Activated B cell treated with CpG ODN at 0.5 μM for 24 hours (primary cell): ENCODE measurements at regions of chr7 and their contacts with region 1.

Region 1: DNA sequence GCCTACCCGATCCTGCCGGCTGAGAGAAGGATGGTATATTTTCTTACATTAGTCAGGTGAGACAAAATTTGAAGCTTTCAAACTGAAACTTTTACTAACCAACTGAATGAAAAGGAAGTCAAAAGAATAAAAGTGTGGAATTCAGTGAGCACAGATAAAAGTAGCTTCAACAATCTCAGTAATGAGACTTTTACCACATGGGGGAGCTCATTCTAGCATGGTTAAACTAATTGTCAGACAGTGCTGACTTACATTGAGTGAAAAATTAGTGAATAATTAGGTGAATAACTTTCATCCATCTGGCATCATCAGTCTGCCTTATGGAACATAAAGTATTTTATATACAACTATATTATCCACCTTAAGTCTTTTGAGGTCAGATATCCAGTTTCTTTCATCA is 8.4 kb downstream of the FAM237B start:
- DNase-seq: no peak
- ATAC-seq: no peak
- H3K4me3 Mint-ChIP-seq: no peak overlapping the region
- H3K27ac Mint-ChIP-seq: no peak overlapping the region
- H3K4me1 Mint-ChIP-seq: no peaks in the 10 kb centered on the region
- H3K27me3 Mint-ChIP-seq: peaks cover 3% of the 10 kb centered on the region
- CTCF ChIP-seq: no peak

Region 2: GRCh38 chr7:90412458-90413184 is 99.9 kb after region 1 on chr7:
- CTCF ChIA-PET with region 1: interaction called, 4 read pairs
- POLR2A ChIA-PET with region 1: no interaction called
- intact Hi-C with region 1: loop called (anchors 1 kb)
- DNase-seq: no peak
- ATAC-seq: no peak
- H3K4me3 Mint-ChIP-seq: no peak overlapping the region
- H3K27ac Mint-ChIP-seq: no peak overlapping the region
- H3K4me1 Mint-ChIP-seq: no peaks in the 10 kb centered on the region
- H3K27me3 Mint-ChIP-seq: no peaks in the 10 kb centered on the region
- CTCF ChIP-seq: no peak